ENCODE measurements at regions of chr19 and their contacts with region 1.

Region 1: GRCh38 chr19:54189735-54190502 is 539 bp upstream of the MBOAT7 start:
- DNase-seq: peak; percentile 100
- H3K4me3 Mint-ChIP-seq: peak overlapping the region; percentile 85
- H3K27ac Mint-ChIP-seq: peak overlapping the region; percentile 100
- H3K4me1 Mint-ChIP-seq: peaks cover 20% of the 10 kb centered on the region
- H3K27me3 Mint-ChIP-seq: no peaks in the 10 kb centered on the region
- CTCF ChIP-seq: no peak

Region 2: GRCh38 chr19:54159352-54160181 is 30.4 kb before region 1 on chr19 and contains the start of gene LENG1:
- CTCF ChIA-PET with region 1: interaction called, 3 read pairs
- POLR2A ChIA-PET with region 1: interaction called, 50 read pairs
- intact Hi-C with region 1: no loop called
- DNase-seq: peak; percentile 100
- H3K4me3 Mint-ChIP-seq: peak within 1 kb of the TSS; percentile 76
- H3K27ac Mint-ChIP-seq: peak within 1 kb of the TSS; percentile 85
- H3K4me1 Mint-ChIP-seq: peaks cover 22% of the 10 kb centered on the region
- H3K27me3 Mint-ChIP-seq: no peaks in the 10 kb centered on the region
- CTCF ChIP-seq: no peak
- total RNA-seq, gene LENG1: 6.1 and 8.2 TPM in 2 replicates

Region 3: DNA sequence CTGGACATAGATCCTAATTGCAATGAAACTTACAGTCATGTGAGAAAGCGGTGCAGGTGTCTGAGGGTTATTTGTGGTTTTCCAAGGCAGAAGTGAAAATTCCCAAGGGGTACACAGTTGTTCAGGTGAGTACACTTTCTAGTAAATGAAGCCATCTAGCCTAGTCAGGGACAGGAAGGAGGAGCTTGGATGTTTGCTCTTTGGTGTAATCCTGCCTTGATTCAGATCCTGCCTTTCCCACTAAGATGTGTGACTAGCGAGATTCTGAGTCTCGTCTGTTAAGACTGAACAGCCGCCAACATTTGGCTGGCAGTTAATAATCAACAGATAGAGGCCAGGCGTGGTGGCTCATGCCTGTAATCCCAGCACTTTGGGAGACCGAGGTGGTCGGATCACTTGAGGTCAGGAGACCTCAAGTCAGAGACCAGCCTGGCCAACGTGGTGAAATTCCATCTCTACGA is 13.3 kb after region 1 on chr19:
- CTCF ChIA-PET with region 1: interaction called, 14 read pairs
- POLR2A ChIA-PET with region 1: interaction called, 324 read pairs
- intact Hi-C with region 1: no loop called
- DNase-seq: peak; percentile 35
- H3K4me3 Mint-ChIP-seq: peak overlapping the region; percentile 91
- H3K27ac Mint-ChIP-seq: no peak overlapping the region
- H3K4me1 Mint-ChIP-seq: peaks cover 17% of the 10 kb centered on the region
- H3K27me3 Mint-ChIP-seq: no peaks in the 10 kb centered on the region
- CTCF ChIP-seq: no peak

Region 4: GRCh38 chr19:54231077-54231931 is 41.4 kb after region 1 on chr19:
- CTCF ChIA-PET with region 1: interaction called, 5 read pairs
- POLR2A ChIA-PET with region 1: interaction called, 4 read pairs
- intact Hi-C with region 1: loop called (anchors 1 kb)
- DNase-seq: peak; percentile 89
- H3K4me3 Mint-ChIP-seq: no peak overlapping the region
- H3K27ac Mint-ChIP-seq: no peak overlapping the region
- H3K4me1 Mint-ChIP-seq: no peaks in the 10 kb centered on the region
- H3K27me3 Mint-ChIP-seq: peaks cover 28% of the 10 kb centered on the region
- CTCF ChIP-seq: peak; percentile 97

Region 5: GRCh38 chr19:54339646-54340358 is 149.9 kb after region 1 on chr19:
- CTCF ChIA-PET with region 1: no interaction called
- POLR2A ChIA-PET with region 1: no interaction called
- intact Hi-C with region 1: no loop called
- DNase-seq: no peak
- H3K4me3 Mint-ChIP-seq: no peak overlapping the region
- H3K27ac Mint-ChIP-seq: no peak overlapping the region
- H3K4me1 Mint-ChIP-seq: no peaks in the 10 kb centered on the region
- H3K27me3 Mint-ChIP-seq: peaks cover 34% of the 10 kb centered on the region
- CTCF ChIP-seq: no peak

Region 6: GRCh38 chr19:55605207-55605636 is 1415.3 kb after region 1 on chr19:
- CTCF ChIA-PET with region 1: no interaction called
- POLR2A ChIA-PET with region 1: no interaction called
- intact Hi-C with region 1: loop called (anchors 5 kb)
- DNase-seq: peak; percentile 99
- H3K4me3 Mint-ChIP-seq: peak overlapping the region; percentile 84
- H3K27ac Mint-ChIP-seq: peak overlapping the region; percentile 80
- H3K4me1 Mint-ChIP-seq: peaks cover 46% of the 10 kb centered on the region
- H3K27me3 Mint-ChIP-seq: no peaks in the 10 kb centered on the region
- CTCF ChIP-seq: no peak

Measured in MCF 10A (cell line).